Colonic mucosa (tissue), 4 donors: ENCODE measurements at regions of chr6 and their contacts with region 1.

Region 1: GRCh38 chr6:161418463-161418945 is 144.6 kb upstream of the AGPAT4 start:
- DNase-seq: peak; percentile 53
- H3K4me3 ChIP-seq: no peak overlapping the region
- H3K27ac ChIP-seq: no peak overlapping the region
- H3K4me1 ChIP-seq: no peaks in the 10 kb centered on the region
- H3K27me3 ChIP-seq: no peaks in the 10 kb centered on the region
- CTCF ChIP-seq: peak; percentile 47

Region 2: GRCh38 chr6:161694995-161695394 is 276.5 kb after region 1 on chr6:
- intact Hi-C with region 1: loop called (anchors 10 kb)
- DNase-seq: no peak
- H3K4me3 ChIP-seq: no peak overlapping the region
- H3K27ac ChIP-seq: no peak overlapping the region
- H3K4me1 ChIP-seq: no peaks in the 10 kb centered on the region
- H3K27me3 ChIP-seq: no peaks in the 10 kb centered on the region
- CTCF ChIP-seq: no peak